CD8-positive, alpha-beta T cell (primary cell): ENCODE measurements at regions of chr7 and their contacts with region 1.

Region 1: DNA sequence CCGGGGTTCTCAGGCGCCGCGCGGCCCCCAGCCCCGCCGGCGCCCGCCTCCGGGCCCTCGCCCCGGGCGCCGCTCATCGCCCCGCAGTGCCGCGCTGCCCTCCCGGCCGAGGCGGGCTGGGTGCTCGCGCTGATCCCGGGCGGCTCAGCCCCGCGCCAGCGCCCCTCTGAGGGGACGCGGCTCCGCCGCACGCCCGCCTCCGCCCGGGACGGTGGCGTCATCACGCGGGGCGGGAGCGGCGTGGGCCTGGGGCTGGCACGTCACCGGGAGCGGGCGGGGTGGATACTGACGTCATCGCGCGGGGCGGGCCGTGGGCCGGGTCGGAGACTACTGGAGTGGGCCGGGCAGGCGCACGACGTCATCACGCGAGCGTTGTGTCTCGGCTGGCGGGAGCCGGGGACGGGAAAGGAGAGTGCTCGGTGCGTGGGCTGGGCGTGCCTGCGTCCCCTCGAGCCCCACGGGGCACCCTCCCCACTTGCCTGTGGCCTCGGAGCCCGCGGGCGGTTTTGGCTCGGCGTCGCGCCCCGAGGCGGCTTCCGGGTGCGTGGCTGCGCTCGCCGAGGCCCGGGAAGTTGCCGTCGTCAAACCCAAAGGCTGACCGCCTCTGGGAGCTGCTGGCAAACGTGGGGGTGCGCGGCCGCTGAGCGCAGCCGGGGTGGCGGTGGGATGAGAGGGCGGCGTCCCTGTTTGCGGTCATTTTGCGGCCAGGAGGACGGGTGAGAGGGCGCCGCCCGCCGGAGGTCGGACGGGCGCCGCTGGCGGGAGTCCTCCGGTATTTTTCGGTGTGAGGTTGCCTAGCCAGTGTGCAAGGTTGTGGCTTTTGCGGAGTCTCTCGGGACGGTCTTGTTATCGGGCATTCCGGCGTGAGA is at the start of gene ESYT2:
- DNase-seq: peak; percentile 98 to 100 (median 99)
- ATAC-seq: peak; percentile 74
- H3K4me3 ChIP-seq: peak within 1 kb of the TSS; percentile 70 to 75
- H3K4me3 Mint-ChIP-seq: peak within 1 kb of the TSS; percentile 94
- H3K27ac ChIP-seq: peak within 1 kb of the TSS; percentile 93 to 97
- H3K27ac Mint-ChIP-seq: peak within 1 kb of the TSS; percentile 95
- H3K4me1 ChIP-seq: peaks cover 32% of the 10 kb centered on the region
- H3K4me1 Mint-ChIP-seq: peaks cover 37% of the 10 kb centered on the region
- H3K27me3 ChIP-seq: no peaks in the 10 kb centered on the region
- H3K27me3 Mint-ChIP-seq: no peaks in the 10 kb centered on the region
- CTCF ChIP-seq: no peak
- total RNA-seq, gene ESYT2: 76.8 to 84.4 TPM

Region 2: DNA sequence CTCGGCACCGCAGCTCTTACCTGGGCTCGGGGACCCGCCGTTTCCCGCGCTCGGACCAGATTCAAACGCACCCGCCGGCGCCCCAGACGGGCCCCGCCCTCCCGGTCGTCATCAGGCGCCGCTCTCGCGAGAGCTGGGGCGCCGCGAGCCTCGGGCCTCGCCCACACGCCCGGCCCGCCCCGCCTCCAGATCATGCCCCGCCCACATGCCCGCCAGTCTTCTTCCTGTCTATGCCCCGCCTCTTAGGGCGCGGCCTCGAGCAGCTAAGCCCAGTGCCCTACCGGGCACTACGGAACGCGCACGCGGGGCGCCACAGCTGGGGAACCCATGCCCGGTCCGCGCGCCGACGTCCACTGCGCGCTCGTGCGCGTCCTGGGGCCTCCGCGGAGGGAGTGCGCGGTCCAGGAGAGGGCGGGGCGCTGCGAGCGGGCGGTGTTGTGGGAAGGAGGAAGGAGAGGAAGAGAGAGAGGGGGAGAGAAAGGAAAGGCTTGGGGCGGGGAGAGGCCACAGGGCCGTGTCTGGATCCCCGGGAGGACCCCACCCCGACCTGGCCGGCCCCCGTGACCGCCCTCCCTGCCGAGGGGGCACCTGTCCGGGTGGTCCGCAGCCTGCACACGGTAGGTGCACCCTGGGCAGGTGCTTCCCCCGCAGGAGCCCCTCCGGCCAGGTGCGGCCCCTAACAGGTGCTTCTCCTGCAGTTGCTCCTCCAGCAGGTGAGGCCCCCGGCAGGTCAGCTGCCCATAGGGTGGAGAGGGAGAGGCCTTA is 124.7 kb before region 1 on chr7 and contains the start of gene NCAPG2:
- CTCF ChIA-PET with region 1: no interaction called
- POLR2A ChIA-PET with region 1: interaction called, 6 read pairs
- intact Hi-C with region 1: loop called (anchors 1 kb)
- DNase-seq: peak; percentile 95 to 99 (median 98)
- ATAC-seq: peak; percentile 99
- H3K4me3 ChIP-seq: peak within 1 kb of the TSS; percentile 68 to 86
- H3K4me3 Mint-ChIP-seq: peak within 1 kb of the TSS; percentile 89
- H3K27ac ChIP-seq: peak within 1 kb of the TSS; percentile 58 to 73
- H3K27ac Mint-ChIP-seq: peak within 1 kb of the TSS; percentile 83
- H3K4me1 ChIP-seq: peaks cover 5% of the 10 kb centered on the region
- H3K4me1 Mint-ChIP-seq: peaks cover 15% of the 10 kb centered on the region
- H3K27me3 ChIP-seq: no peaks in the 10 kb centered on the region
- H3K27me3 Mint-ChIP-seq: no peaks in the 10 kb centered on the region
- CTCF ChIP-seq: no peak
- total RNA-seq, gene NCAPG2: 3.2 to 4.5 TPM

Region 3: DNA sequence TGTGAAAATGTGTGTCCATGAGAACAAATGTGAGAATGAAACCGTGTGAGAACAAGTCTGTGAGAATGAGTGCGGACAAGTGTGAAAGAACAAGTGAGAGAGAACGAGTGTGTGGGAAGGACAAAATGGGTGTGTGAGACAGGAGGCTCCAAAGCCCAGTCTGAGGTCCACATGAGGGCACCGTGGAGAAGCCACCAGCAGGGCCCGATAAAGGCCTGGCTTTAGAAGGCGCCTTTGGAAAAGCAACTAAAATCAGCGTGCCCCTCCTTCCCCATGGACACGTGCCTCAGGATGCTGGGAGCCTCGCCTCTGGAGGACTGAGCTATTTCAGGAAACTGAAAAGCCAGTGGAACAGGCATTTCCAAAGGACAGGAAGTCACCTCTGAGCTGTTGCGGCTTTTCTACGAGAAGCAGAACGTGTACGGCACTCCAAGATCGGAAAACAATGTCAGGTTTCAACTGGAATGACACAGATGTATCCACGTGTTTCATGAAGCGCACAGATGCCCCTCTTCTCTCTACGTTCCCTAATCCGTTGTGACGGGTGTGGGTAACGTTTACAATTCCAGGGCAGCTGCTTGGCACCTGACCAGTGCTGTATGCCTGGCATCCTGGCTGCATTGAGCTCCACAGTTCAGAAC is 46.7 kb before region 1 on chr7:
- CTCF ChIA-PET with region 1: interaction called, 3 read pairs
- POLR2A ChIA-PET with region 1: interaction called, 4 read pairs
- intact Hi-C with region 1: loop called (anchors 2 kb)
- DNase-seq: peak in 3 of 9 experiments; percentile 28 to 57 (median 40)
- ATAC-seq: peak; percentile 36
- H3K4me3 ChIP-seq: no peak overlapping the region
- H3K4me3 Mint-ChIP-seq: no peak overlapping the region
- H3K27ac ChIP-seq: peak overlapping the region in 1 of 2 experiments; percentile 26
- H3K27ac Mint-ChIP-seq: no peak overlapping the region
- H3K4me1 ChIP-seq: peaks cover 31% of the 10 kb centered on the region
- H3K4me1 Mint-ChIP-seq: no peaks in the 10 kb centered on the region
- H3K27me3 ChIP-seq: no peaks in the 10 kb centered on the region
- H3K27me3 Mint-ChIP-seq: no peaks in the 10 kb centered on the region
- CTCF ChIP-seq: no peak

Region 4: GRCh38 chr7:158809596-158809995 is 20.0 kb before region 1 on chr7:
- CTCF ChIA-PET with region 1: interaction called, 7 read pairs
- POLR2A ChIA-PET with region 1: interaction called, 32 read pairs
- intact Hi-C with region 1: loop called (anchors 1 to 2 kb)
- DNase-seq: peak in 2 of 9 experiments; percentile 34 to 55
- ATAC-seq: no peak
- H3K4me3 ChIP-seq: no peak overlapping the region
- H3K4me3 Mint-ChIP-seq: peak overlapping the region; percentile 31
- H3K27ac ChIP-seq: peak overlapping the region in 1 of 2 experiments; percentile 41
- H3K27ac Mint-ChIP-seq: peak overlapping the region; percentile 83
- H3K4me1 ChIP-seq: peaks cover 67% of the 10 kb centered on the region
- H3K4me1 Mint-ChIP-seq: peaks cover 77% of the 10 kb centered on the region
- H3K27me3 ChIP-seq: no peaks in the 10 kb centered on the region
- H3K27me3 Mint-ChIP-seq: no peaks in the 10 kb centered on the region
- CTCF ChIP-seq: no peak

Region 5: GRCh38 chr7:158847451-158847866 is 17.9 kb after region 1 on chr7:
- CTCF ChIA-PET with region 1: no interaction called
- POLR2A ChIA-PET with region 1: interaction called, 7 read pairs
- intact Hi-C with region 1: loop called in 1 of 2 experiments (anchors 2 kb)
- DNase-seq: peak in 1 of 9 experiments; percentile 48
- ATAC-seq: peak; percentile 49
- H3K4me3 ChIP-seq: peak overlapping the region; percentile 28 to 35
- H3K4me3 Mint-ChIP-seq: peak overlapping the region; percentile 80
- H3K27ac ChIP-seq: peak overlapping the region; percentile 27 to 79
- H3K27ac Mint-ChIP-seq: peak overlapping the region; percentile 90
- H3K4me1 ChIP-seq: peaks cover 16% of the 10 kb centered on the region
- H3K4me1 Mint-ChIP-seq: peaks cover 30% of the 10 kb centered on the region
- H3K27me3 ChIP-seq: no peaks in the 10 kb centered on the region
- H3K27me3 Mint-ChIP-seq: no peaks in the 10 kb centered on the region
- CTCF ChIP-seq: no peak

Region 6: GRCh38 chr7:158924956-158925355 is 95.4 kb after region 1 on chr7:
- CTCF ChIA-PET with region 1: no interaction called
- POLR2A ChIA-PET with region 1: no interaction called
- intact Hi-C with region 1: no loop called
- DNase-seq: no peak
- ATAC-seq: no peak
- H3K4me3 ChIP-seq: no peak overlapping the region
- H3K4me3 Mint-ChIP-seq: no peak overlapping the region
- H3K27ac ChIP-seq: no peak overlapping the region
- H3K27ac Mint-ChIP-seq: no peak overlapping the region
- H3K4me1 ChIP-seq: no peaks in the 10 kb centered on the region
- H3K4me1 Mint-ChIP-seq: no peaks in the 10 kb centered on the region
- H3K27me3 ChIP-seq: no peaks in the 10 kb centered on the region
- H3K27me3 Mint-ChIP-seq: no peaks in the 10 kb centered on the region
- CTCF ChIP-seq: no peak

Region 7: GRCh38 chr7:158935062-158935461 is 105.5 kb after region 1 on chr7:
- CTCF ChIA-PET with region 1: no interaction called
- POLR2A ChIA-PET with region 1: no interaction called
- intact Hi-C with region 1: no loop called
- DNase-seq: no peak
- ATAC-seq: no peak
- H3K4me3 ChIP-seq: no peak overlapping the region
- H3K4me3 Mint-ChIP-seq: no peak overlapping the region
- H3K27ac ChIP-seq: no peak overlapping the region
- H3K27ac Mint-ChIP-seq: no peak overlapping the region
- H3K4me1 ChIP-seq: no peaks in the 10 kb centered on the region
- H3K4me1 Mint-ChIP-seq: no peaks in the 10 kb centered on the region
- H3K27me3 ChIP-seq: no peaks in the 10 kb centered on the region
- H3K27me3 Mint-ChIP-seq: no peaks in the 10 kb centered on the region
- CTCF ChIP-seq: no peak